ENCODE measurements at regions of chr5 and their contacts with region 1.

Region 1: DNA sequence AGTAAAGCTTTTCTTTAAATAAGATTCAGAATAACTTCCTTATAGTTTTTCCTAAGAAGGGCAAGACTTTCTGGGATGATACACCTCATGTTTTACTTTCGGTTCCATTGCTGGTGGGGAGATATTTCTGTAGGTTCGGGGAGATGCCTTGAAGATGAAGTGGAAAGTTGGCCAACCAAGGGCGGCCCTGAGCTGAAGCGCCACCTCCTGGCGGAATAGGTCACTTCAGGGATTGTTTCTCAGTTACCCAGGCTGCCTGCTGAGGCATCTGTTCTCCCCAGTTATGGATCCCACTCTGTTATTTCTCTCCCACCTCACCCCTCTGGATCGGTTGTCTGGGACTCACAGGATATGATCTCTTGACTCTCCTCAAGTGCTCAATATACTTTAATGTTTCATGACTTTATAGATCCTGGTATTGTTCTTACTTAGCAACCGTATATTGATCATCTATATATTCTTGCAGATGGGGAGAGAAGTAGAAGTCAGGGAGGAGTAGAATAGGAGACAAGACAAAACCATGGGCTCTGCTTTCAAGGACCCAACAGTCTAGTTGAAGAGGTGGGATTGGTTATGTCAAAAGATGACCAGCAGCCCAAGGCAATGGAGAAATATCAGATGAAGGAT is 23.4 kb downstream of the MEGF10 start:
- DNase-seq: peak; percentile 55
- H3K4me3 ChIP-seq: no peak overlapping the region
- H3K27ac ChIP-seq: no peak overlapping the region
- H3K4me1 ChIP-seq: no peaks in the 10 kb centered on the region
- CTCF ChIP-seq: peak; percentile 92

Region 2: GRCh38 chr5:126339215-126339805 is 974.6 kb before region 1 on chr5:
- CTCF ChIA-PET with region 1: no interaction called
- POLR2A ChIA-PET with region 1: no interaction called
- intact Hi-C with region 1: loop called (anchors 5 kb)
- DNase-seq: peak; percentile 74
- H3K4me3 ChIP-seq: no peak overlapping the region
- H3K27ac ChIP-seq: no peak overlapping the region
- H3K4me1 ChIP-seq: no peaks in the 10 kb centered on the region
- CTCF ChIP-seq: peak; percentile 98

Region 3: GRCh38 chr5:126656396-126657007 is 657.5 kb before region 1 on chr5:
- CTCF ChIA-PET with region 1: no interaction called
- POLR2A ChIA-PET with region 1: no interaction called
- intact Hi-C with region 1: loop called (anchors 1 kb)
- DNase-seq: peak; percentile 55
- H3K4me3 ChIP-seq: no peak overlapping the region
- H3K27ac ChIP-seq: no peak overlapping the region
- H3K4me1 ChIP-seq: peaks cover 6% of the 10 kb centered on the region
- CTCF ChIP-seq: peak; percentile 97

Region 4: GRCh38 chr5:126676195-126676624 is 637.8 kb before region 1 on chr5:
- CTCF ChIA-PET with region 1: no interaction called
- POLR2A ChIA-PET with region 1: no interaction called
- intact Hi-C with region 1: loop called (anchors 1 kb)
- DNase-seq: peak; percentile 82
- H3K4me3 ChIP-seq: no peak overlapping the region
- H3K27ac ChIP-seq: no peak overlapping the region
- H3K4me1 ChIP-seq: peaks cover 15% of the 10 kb centered on the region
- CTCF ChIP-seq: peak; percentile 95

Region 5: GRCh38 chr5:126846344-126846743 is 467.6 kb before region 1 on chr5:
- CTCF ChIA-PET with region 1: no interaction called
- POLR2A ChIA-PET with region 1: no interaction called
- intact Hi-C with region 1: loop called (anchors 10 kb)
- DNase-seq: no peak
- H3K4me3 ChIP-seq: no peak overlapping the region
- H3K27ac ChIP-seq: no peak overlapping the region
- H3K4me1 ChIP-seq: peaks cover 10% of the 10 kb centered on the region
- CTCF ChIP-seq: no peak

Region 6: DNA sequence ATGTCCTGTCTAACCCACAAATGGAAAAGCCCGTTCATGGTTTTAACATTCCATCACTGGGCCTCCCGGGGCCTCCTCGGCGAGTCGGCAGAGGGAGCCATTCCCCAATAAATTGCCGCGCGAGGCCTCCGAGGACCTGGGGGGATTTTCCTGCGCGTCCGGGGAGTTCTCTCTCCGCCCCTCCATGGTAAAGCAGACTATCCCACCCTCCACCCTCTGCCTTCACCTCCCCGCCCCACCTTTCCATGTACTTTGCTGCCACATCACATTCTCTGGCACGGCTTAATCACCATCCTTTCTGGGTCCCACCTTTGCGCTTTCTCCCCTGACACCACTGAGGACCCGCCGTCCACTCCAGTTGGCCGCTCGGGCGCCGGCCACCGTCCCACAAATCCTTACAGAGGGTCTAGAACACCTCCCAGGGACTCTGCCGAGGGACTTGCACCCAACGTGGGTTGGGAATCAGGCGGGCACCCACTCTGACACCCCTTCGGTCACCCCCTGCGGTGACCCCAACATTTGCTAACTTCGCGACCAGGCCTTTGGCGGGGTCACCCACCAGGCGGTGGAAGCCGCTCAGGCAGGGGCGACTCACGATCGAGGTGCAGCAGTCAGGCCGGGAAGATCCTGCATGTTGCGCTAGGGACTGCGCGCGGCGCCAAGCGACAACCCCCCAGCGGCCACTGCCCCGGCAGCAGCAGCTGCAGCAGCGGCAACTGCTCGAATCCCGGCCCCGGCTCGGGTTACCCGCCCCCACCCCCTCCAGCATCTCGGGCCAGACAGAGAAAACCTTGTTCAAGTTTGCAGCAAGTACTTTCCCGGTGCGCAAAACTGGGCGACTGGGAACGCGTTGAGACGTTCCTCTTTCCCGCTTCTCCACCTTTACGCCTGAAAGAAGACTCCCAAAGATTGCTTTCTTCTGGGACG is 23.7 kb before region 1 on chr5 and contains the start of gene MEGF10:
- CTCF ChIA-PET with region 1: no interaction called
- POLR2A ChIA-PET with region 1: no interaction called
- intact Hi-C with region 1: no loop called
- DNase-seq: no peak
- H3K4me3 ChIP-seq: no peak within 1 kb of the TSS
- H3K27ac ChIP-seq: no peak within 1 kb of the TSS
- H3K4me1 ChIP-seq: no peaks in the 10 kb centered on the region
- CTCF ChIP-seq: no peak
- total RNA-seq, gene MEGF10: not detected in 2 replicates

Region 7: DNA sequence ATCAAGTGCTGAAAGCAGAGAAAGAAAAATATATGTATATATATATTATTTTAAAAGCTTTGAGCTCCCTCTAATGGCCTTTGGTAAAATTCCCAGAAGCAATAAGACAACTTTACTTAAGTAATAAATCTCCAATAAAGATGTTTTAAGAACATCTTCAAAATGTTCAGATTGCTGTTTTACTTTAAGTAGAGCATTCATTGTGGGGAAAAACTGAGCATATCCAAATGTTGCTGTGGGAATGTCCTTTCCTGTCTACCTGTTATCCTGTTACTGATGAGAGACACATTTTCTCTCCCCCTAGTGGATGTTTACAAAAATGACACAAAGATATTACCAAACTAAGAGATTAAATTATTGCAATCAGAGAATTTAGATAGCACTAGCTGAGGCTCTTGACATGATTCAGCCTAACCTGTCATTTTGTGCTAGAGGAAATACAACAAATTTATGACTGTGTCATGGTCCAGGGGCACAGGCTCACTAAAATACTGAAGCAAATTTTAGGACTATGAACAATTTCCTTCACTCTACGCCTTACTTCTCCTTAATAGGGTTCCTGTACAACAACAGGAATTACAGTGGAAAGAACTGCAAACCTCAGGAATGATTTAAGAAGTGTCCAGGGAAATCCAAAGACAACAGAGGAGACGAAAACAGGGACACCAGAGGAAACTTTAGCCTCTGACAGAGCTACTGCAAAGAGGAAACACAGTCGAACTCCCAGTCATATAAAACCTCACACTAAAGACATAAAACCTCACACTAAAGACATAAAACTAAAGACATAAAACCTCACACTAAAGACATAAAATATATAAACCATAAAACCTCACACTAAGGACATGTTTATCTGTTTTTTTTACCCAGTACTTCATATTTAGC is 179.1 kb after region 1 on chr5:
- CTCF ChIA-PET with region 1: no interaction called
- POLR2A ChIA-PET with region 1: no interaction called
- intact Hi-C with region 1: loop called (anchors 10 kb)
- DNase-seq: peak; percentile 53
- H3K4me3 ChIP-seq: no peak overlapping the region
- H3K27ac ChIP-seq: no peak overlapping the region
- H3K4me1 ChIP-seq: no peaks in the 10 kb centered on the region
- CTCF ChIP-seq: peak; percentile 100